ENCODE measurements at regions of chr19 and their contacts with region 1.

Region 1: DNA sequence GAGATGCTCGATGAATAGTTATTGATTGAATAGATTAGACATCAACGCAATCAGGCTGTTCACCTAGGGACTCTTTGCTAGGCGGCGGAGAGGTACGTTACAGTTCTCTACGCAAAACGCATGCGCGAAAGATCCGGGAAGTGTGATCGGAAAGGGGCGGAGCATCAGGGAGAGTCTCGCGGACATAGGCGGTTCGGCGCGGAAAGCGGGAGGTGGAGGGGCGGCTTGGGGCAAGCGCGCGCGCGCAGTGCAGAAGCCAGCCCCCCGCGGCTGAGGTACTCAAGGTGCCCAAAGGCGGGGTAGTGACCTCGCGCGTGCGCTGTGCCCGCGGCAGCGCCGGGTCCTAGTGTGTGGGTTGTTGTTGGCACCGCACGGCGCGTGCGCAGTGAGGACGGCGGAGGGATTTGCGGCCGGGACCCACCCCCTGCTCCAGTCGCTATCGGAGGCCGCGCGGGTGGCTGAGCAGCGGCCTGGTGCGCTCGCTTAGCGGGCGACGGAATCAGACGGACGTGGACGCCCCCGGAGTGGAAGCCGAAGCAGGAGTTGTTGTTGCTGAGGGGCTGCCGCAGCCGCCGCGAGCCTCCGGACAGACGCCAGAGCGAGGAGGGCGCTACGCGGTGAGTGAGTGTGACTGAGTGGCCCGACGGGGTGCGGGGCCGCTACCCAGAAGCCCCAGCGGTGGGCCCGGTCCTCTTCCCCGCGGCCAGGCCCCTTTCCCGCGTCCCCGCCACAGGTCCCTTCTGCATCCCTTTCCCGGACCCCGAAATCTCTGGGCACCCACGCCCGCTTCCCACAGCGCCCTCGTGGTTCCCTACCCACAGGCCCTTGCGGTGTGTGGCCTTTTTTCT is at the start of gene SNRNP70:
- DNase-seq: peak; percentile 99 to 100 (median 100)
- ATAC-seq: peak; percentile 97
- H3K4me3 ChIP-seq: peak within 1 kb of the TSS; percentile 72
- H3K4me3 Mint-ChIP-seq: peak within 1 kb of the TSS; percentile 71 to 97 (median 94)
- H3K27ac ChIP-seq: peak within 1 kb of the TSS; percentile 94
- H3K27ac Mint-ChIP-seq: peak within 1 kb of the TSS; percentile 83 to 96 (median 88)
- H3K4me1 ChIP-seq: peaks cover 19% of the 10 kb centered on the region in 2 donors
- H3K4me1 Mint-ChIP-seq: peaks cover 18 to 49% (median 35%) of the 10 kb centered on the region in 7 donors
- H3K27me3 ChIP-seq: no peaks in the 10 kb centered on the region
- H3K27me3 Mint-ChIP-seq: peaks cover 0 to 5% (median 4%) of the 10 kb centered on the region in 5 donors
- total RNA-seq, gene SNRNP70: 243 to 837 (median 449) TPM

Region 2: GRCh38 chr19:48390169-48391106 is 694.8 kb before region 1 on chr19:
- CTCF ChIA-PET with region 1: no interaction called
- POLR2A ChIA-PET with region 1: no interaction called
- intact Hi-C with region 1: no loop called
- DNase-seq: peak; percentile 41 to 69 (median 57)
- ATAC-seq: peak; percentile 80
- H3K4me3 ChIP-seq: peak overlapping the region; percentile 96
- H3K4me3 Mint-ChIP-seq: peak overlapping the region; percentile 84 to 95 (median 92)
- H3K27ac ChIP-seq: peak overlapping the region; percentile 92
- H3K27ac Mint-ChIP-seq: peak overlapping the region; percentile 78 to 97 (median 93)
- H3K4me1 ChIP-seq: peaks cover 15 to 32% of the 10 kb centered on the region in 2 donors
- H3K4me1 Mint-ChIP-seq: peaks cover 5 to 42% (median 33%) of the 10 kb centered on the region in 7 donors
- H3K27me3 ChIP-seq: peaks cover 6 to 14% of the 10 kb centered on the region in 2 donors
- H3K27me3 Mint-ChIP-seq: peaks cover 8 to 33% (median 14%) of the 10 kb centered on the region in 5 donors

Region 3: GRCh38 chr19:48713864-48714758 is 371.1 kb before region 1 on chr19:
- CTCF ChIA-PET with region 1: no interaction called
- POLR2A ChIA-PET with region 1: no interaction called
- intact Hi-C with region 1: loop called in 1 of 2 experiments (anchors 1 kb)
- DNase-seq: peak; percentile 92 to 97 (median 97)
- ATAC-seq: peak; percentile 96
- H3K4me3 ChIP-seq: peak overlapping the region; percentile 95
- H3K4me3 Mint-ChIP-seq: peak overlapping the region; percentile 82 to 92 (median 88)
- H3K27ac ChIP-seq: peak overlapping the region; percentile 79
- H3K27ac Mint-ChIP-seq: peak overlapping the region; percentile 16 to 90 (median 81)
- H3K4me1 ChIP-seq: peaks cover 11 to 12% of the 10 kb centered on the region in 2 donors
- H3K4me1 Mint-ChIP-seq: peaks cover 9 to 24% (median 20%) of the 10 kb centered on the region in 7 donors
- H3K27me3 ChIP-seq: no peaks in the 10 kb centered on the region
- H3K27me3 Mint-ChIP-seq: no peaks in the 10 kb centered on the region

Region 4: GRCh38 chr19:48987423-48987722 is 97.9 kb before region 1 on chr19:
- CTCF ChIA-PET with region 1: no interaction called
- POLR2A ChIA-PET with region 1: no interaction called
- intact Hi-C with region 1: no loop called
- DNase-seq: no peak
- ATAC-seq: no peak
- H3K4me3 ChIP-seq: no peak overlapping the region
- H3K4me3 Mint-ChIP-seq: no peak overlapping the region
- H3K27ac ChIP-seq: no peak overlapping the region
- H3K27ac Mint-ChIP-seq: no peak overlapping the region
- H3K4me1 ChIP-seq: peaks cover 9% of the 10 kb centered on the region in 2 donors
- H3K4me1 Mint-ChIP-seq: peaks cover 16 to 23% (median 22%) of the 10 kb centered on the region in 7 donors
- H3K27me3 ChIP-seq: no peaks in the 10 kb centered on the region
- H3K27me3 Mint-ChIP-seq: no peaks in the 10 kb centered on the region

Region 5: DNA sequence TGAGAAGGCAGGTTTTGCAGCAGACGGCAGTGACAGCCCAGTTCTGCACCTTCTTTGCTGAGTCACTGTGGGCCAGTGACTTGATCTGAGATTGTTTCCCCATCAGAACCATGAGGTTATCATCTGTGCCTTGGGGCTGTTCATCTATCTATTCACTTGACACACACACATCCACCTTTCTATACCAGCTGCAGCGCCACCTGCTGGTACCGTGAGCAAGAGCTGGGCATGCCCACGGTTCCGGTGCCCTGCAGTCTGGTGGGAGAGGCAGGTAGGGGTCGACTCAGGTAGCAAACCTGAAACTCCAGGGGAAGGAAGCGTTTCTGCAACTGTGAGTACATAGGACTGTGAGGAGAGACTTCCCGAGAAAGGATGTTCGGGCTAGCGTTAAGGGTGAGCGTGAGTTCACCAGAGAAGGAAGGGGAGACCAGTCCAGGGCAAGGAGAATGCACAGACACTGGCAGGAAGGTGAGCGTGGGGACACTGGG is 21.4 kb after region 1 on chr19:
- CTCF ChIA-PET with region 1: no interaction called
- POLR2A ChIA-PET with region 1: no interaction called
- intact Hi-C with region 1: loop called in 1 of 2 experiments (anchors 2 kb)
- DNase-seq: peak; percentile 38 to 67 (median 57)
- ATAC-seq: peak; percentile 85
- H3K4me3 ChIP-seq: no peak overlapping the region
- H3K4me3 Mint-ChIP-seq: no peak overlapping the region
- H3K27ac ChIP-seq: no peak overlapping the region
- H3K27ac Mint-ChIP-seq: peak overlapping the region in 4 of 9 donors; percentile 26 to 72 (median 52)
- H3K4me1 ChIP-seq: no peaks in the 10 kb centered on the region
- H3K4me1 Mint-ChIP-seq: peaks cover 3 to 14% (median 8%) of the 10 kb centered on the region in 7 donors
- H3K27me3 ChIP-seq: no peaks in the 10 kb centered on the region
- H3K27me3 Mint-ChIP-seq: no peaks in the 10 kb centered on the region

Region 6: GRCh38 chr19:49127674-49128544 is 42.7 kb after region 1 on chr19:
- CTCF ChIA-PET with region 1: no interaction called
- POLR2A ChIA-PET with region 1: no interaction called
- intact Hi-C with region 1: loop called in 1 of 2 experiments (anchors 1 kb)
- DNase-seq: peak; percentile 89 to 97 (median 94)
- ATAC-seq: peak; percentile 99
- H3K4me3 ChIP-seq: peak overlapping the region; percentile 71
- H3K4me3 Mint-ChIP-seq: peak overlapping the region; percentile 82 to 98 (median 90)
- H3K27ac ChIP-seq: no peak overlapping the region
- H3K27ac Mint-ChIP-seq: peak overlapping the region; percentile 8 to 98 (median 88)
- H3K4me1 ChIP-seq: peaks cover 5 to 8% of the 10 kb centered on the region in 2 donors
- H3K4me1 Mint-ChIP-seq: peaks cover 10 to 18% (median 12%) of the 10 kb centered on the region in 7 donors
- H3K27me3 ChIP-seq: no peaks in the 10 kb centered on the region
- H3K27me3 Mint-ChIP-seq: peaks cover 0 to 14% (median 0%) of the 10 kb centered on the region in 5 donors